ENCODE measurements at regions of chr1 and their contacts with region 1.

Region 1: GRCh38 chr1:41751804-41752513 is 166.8 kb downstream of the HIVEP3 start:
- DNase-seq: peak; percentile 25
- H3K4me3 ChIP-seq: peak overlapping the region; percentile 7
- H3K27ac ChIP-seq: peak overlapping the region; percentile 63
- H3K4me1 ChIP-seq: peaks cover 46% of the 10 kb centered on the region
- CTCF ChIP-seq: no peak

Region 2: GRCh38 chr1:41662061-41662764 is 89.7 kb before region 1 on chr1:
- CTCF ChIA-PET with region 1: no interaction called
- POLR2A ChIA-PET with region 1: no interaction called
- intact Hi-C with region 1: no loop called
- DNase-seq: no peak
- H3K4me3 ChIP-seq: no peak overlapping the region
- H3K27ac ChIP-seq: no peak overlapping the region
- H3K4me1 ChIP-seq: peaks cover 8% of the 10 kb centered on the region
- CTCF ChIP-seq: no peak

Region 3: GRCh38 chr1:41728403-41729202 is 23.4 kb before region 1 on chr1:
- CTCF ChIA-PET with region 1: no interaction called
- POLR2A ChIA-PET with region 1: no interaction called
- intact Hi-C with region 1: loop called (anchors 1 kb)
- DNase-seq: peak; percentile 33
- H3K4me3 ChIP-seq: no peak overlapping the region
- H3K27ac ChIP-seq: no peak overlapping the region
- H3K4me1 ChIP-seq: peaks cover 35% of the 10 kb centered on the region
- CTCF ChIP-seq: no peak

Region 4: DNA sequence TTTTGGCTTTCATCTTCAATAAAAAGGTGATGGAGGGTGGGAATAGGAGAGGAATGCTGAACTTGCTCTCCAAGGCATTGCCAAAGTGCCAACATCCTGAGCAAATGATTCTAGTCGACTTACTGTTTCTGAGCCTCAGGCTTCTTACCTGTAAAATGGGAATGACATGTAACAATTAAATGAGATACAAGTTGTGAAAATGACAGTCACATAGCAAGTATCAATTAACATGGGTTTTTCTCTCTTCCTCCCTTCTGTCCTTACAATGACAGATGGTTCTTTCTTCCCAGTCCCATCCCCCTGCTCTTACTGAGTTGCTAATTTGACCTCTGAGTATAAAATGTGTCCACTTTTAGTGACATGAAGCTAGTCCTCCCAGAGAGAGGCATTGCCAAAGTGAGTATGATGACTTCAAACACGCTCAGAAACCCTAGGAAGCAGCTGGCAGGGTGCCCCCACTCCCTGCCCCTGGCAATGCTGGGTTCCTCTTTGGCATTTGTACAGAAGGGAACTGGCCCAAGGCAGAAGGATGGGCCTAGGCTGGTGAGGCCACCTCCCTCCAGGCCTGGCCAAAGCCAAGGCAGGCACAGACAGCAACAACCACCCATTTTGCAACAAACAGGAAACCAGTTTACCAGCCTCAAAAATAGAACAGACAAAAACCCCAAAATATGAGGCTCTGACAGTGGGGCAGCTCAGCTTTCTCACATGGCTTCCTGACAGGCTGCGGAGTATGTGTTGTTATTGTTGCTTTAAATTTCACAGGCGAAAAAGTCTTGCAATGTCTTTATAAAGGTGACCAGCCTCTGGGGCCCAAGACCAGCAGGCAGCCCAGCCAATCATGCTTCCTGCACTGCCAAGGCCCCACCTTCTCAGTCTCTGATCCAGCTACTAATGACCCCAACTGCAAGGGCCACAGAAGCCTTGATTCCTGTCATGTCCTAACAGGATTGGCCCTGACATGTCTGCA is 50.9 kb after region 1 on chr1:
- CTCF ChIA-PET with region 1: no interaction called
- POLR2A ChIA-PET with region 1: no interaction called
- intact Hi-C with region 1: loop called (anchors 5 kb)
- DNase-seq: peak; percentile 41
- H3K4me3 ChIP-seq: peak overlapping the region; percentile 21
- H3K27ac ChIP-seq: peak overlapping the region; percentile 55
- H3K4me1 ChIP-seq: peaks cover 47% of the 10 kb centered on the region
- CTCF ChIP-seq: no peak

Region 5: DNA sequence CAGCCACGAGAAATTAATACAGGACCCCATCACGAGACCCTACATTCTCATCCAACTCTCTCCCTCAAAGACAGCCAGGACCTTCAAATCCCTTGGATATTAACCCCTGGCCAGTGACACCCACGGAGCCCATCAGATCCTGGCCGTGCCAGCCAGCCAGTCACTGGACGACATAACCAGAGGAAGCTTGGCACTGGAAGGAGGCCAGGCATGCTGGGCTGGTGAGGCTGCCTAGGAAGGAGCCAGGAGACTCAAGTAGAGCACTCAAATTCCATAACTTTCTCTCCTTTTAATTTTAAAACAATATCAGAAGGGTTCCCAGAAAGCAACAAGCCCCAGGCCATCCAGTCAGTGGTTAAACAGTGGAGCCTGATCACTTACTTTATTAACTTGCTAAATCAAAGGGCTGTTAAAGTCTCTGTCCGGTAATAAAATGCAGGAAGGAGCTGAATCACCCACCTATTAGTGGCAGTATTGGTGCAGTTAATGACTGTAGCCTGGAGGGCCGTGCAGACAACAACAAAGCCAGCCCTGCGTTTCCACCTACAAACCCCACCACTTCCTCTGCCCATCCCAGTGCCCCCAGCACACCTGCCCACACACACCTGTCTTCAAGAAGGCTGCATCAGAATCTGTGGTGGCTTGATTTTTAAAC is 88.8 kb after region 1 on chr1:
- CTCF ChIA-PET with region 1: no interaction called
- POLR2A ChIA-PET with region 1: no interaction called
- intact Hi-C with region 1: no loop called
- DNase-seq: no peak
- H3K4me3 ChIP-seq: no peak overlapping the region
- H3K27ac ChIP-seq: no peak overlapping the region
- H3K4me1 ChIP-seq: no peaks in the 10 kb centered on the region
- CTCF ChIP-seq: no peak

Region 6: DNA sequence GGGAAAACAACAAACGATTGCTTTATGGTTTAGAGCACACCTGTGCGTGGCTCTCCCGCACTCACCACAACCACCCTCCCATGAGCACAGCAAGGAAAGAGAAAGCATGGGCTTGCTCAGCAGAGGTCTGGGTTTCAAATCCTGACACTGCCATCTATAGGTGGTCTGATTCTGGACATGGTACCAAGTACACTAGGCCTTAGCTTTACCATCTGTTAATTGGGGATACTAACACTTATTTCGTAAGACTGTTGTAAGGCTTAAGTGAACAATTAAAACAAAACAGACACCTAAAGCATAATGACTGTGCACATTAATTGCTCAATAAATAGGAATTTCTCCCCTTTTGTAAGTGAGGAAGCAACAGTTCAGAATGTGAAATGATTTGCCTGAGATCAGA is 116.6 kb after region 1 on chr1:
- CTCF ChIA-PET with region 1: no interaction called
- POLR2A ChIA-PET with region 1: no interaction called
- intact Hi-C with region 1: loop called (anchors 10 kb)
- DNase-seq: peak; percentile 34
- H3K4me3 ChIP-seq: no peak overlapping the region
- H3K27ac ChIP-seq: no peak overlapping the region
- H3K4me1 ChIP-seq: no peaks in the 10 kb centered on the region
- CTCF ChIP-seq: peak; percentile 64

Region 7: DNA sequence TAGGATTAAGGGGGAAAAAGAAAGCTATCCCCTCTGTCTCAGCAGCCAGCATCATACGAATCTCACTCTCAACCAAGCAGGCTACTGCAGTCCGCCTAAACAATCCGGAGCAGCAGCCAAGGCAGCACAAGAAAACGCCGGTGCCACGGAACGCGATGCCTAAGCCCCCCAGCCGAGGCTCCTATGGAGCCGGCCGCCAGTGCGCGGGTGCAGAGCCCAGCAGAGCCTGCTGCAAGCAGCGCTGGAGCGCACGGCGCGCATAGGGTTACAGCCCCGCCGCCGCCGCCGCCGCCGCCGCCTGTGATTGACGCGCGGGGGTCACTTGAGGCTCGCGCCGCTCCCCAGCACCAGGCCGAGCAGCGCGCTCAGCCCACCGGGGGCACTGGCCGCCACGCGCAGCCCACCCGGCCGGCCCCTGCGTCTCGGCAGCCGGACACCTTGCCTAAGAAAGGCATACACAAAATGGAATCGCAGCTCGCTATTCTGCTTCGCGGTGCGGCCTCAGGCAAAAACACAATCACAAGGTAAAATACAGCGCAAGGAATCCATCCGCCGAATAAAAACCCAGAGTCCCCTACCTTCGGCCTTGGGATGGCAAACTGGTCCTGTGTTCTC is 166.0 kb after region 1 on chr1:
- CTCF ChIA-PET with region 1: no interaction called
- POLR2A ChIA-PET with region 1: no interaction called
- intact Hi-C with region 1: no loop called
- DNase-seq: no peak
- H3K4me3 ChIP-seq: no peak overlapping the region
- H3K27ac ChIP-seq: no peak overlapping the region
- H3K4me1 ChIP-seq: no peaks in the 10 kb centered on the region
- CTCF ChIP-seq: no peak

Region 8: GRCh38 chr1:42576935-42577334 is 825.0 kb after region 1 on chr1:
- CTCF ChIA-PET with region 1: no interaction called
- POLR2A ChIA-PET with region 1: no interaction called
- intact Hi-C with region 1: no loop called
- DNase-seq: no peak
- H3K4me3 ChIP-seq: no peak overlapping the region
- H3K27ac ChIP-seq: no peak overlapping the region
- H3K4me1 ChIP-seq: no peaks in the 10 kb centered on the region
- CTCF ChIP-seq: no peak

Measured in OCI-LY7 (cell line).